ENCODE measurements at regions of chr12 and their contacts with region 1.

Region 1: DNA sequence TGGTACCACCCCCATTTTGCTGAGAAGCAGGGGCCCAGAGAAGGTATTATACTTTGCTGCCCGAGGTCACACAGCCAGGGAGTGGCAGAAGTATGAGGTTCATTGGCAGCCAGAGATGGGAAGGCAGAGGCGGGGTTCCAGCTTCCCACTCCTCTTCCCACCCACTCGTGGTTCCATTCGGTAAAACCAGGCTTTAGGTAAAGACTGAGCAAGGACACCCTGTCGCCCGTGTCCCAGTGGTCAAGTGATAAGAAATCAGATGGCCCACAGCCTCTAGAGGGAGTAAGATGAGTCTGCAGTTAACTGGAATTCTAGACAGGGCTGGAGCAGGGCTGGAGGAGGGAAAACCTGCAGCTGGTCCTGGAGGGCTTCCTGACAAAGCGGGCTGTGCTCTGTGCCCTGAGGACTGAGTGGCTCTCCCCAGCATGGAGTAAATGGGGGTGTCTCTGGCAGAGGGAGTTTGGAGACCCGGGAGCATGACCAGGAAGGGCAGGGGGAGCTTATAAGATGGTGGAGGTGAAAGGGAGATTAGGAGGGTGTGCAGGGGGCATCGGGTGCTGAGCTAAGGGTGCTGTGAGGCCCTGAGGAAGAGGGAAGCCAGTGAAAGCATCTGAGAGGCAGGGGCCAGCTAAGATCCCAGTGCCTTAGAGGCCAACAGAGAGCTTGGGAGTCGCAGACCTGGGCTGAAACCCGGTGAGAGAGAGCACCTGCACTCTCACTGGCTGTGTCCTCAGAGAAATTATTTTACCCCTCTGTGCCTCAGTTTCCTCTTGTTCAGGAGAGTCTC is 5.8 kb downstream of the FAM222A start:
- DNase-seq: peak; percentile 72
- H3K4me3 ChIP-seq: peak overlapping the region in 1 of 2 experiments; percentile 62; a peak in 1 of 4 replicates
- H3K27ac ChIP-seq: peak overlapping the region in 1 of 2 experiments; percentile 92; a peak in 2 of 4 replicates
- H3K4me1 ChIP-seq: peaks cover 0 to 90% of the 10 kb centered on the region in 2 experiments; a peak in 2 of 4 replicates
- H3K27me3 ChIP-seq: no peaks in the 10 kb centered on the region; the same call in none of the 2 replicates
- CTCF ChIP-seq: peak; percentile 40
- EP300 ChIP-seq: no peak; a peak in 1 of 4 replicates
- RAD21 ChIP-seq: peak; percentile 62

Region 2: GRCh38 chr12:109645194-109645593 is 74.2 kb before region 1 on chr12:
- CTCF ChIA-PET with region 1: interaction called, 11 read pairs
- POLR2A ChIA-PET with region 1: interaction called, 14 read pairs
- DNase-seq: peak; percentile 70
- H3K4me3 ChIP-seq: no peak overlapping the region
- H3K27ac ChIP-seq: peak overlapping the region in 1 of 2 experiments; percentile 95; a peak in 2 of 4 replicates
- H3K4me1 ChIP-seq: peaks cover 0 to 55% of the 10 kb centered on the region in 2 experiments; a peak in 2 of 4 replicates
- H3K27me3 ChIP-seq: no peaks in the 10 kb centered on the region; the same call in 1 of the 2 replicates
- CTCF ChIP-seq: no peak
- EP300 ChIP-seq: peak in 1 of 2 experiments; percentile 62; a peak in 1 of 4 replicates
- RAD21 ChIP-seq: peak; percentile 6; the same call in 1 of the 2 replicates

Region 3: DNA sequence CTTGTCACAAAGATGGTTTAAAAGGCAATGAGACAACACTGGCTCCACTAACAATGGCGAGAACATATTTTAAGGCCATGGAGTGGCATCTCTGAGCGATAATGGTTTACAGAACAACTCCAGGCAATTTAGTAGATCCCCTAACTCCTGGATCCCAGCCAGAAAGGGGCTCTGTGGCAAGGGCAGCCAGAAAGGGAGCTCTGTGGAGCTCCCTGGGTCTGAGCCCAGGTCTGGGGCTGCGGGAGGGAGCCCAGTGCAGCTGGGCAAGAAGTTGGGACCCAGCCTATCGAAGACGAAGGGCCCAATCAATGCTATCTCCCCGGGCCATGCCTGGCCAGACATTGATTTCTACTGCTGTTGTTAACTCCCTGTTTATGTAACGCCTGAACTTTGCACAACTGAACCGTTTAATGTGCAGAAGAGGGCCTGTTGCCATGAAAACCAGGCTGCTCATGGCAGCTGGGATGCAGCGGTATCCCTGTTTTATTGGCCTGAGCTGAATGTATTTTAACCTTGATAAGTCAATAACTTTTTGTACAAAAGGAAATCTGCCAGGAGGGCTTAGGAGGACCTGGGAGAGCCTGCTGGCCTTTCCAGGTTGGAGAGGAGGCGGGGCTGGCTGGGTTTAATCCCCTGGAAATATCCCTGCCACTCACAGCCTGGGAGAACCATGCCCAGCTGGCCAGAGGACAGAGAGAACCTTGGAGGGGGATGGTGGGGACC is 12.5 kb before region 1 on chr12:
- CTCF ChIA-PET with region 1: interaction called, 11 read pairs
- POLR2A ChIA-PET with region 1: interaction called, 6 read pairs
- DNase-seq: peak; percentile 80
- H3K4me3 ChIP-seq: no peak overlapping the region
- H3K27ac ChIP-seq: peak overlapping the region in 1 of 2 experiments; percentile 89; a peak in 2 of 4 replicates
- H3K4me1 ChIP-seq: peaks cover 0 to 38% of the 10 kb centered on the region in 2 experiments; a peak in 2 of 4 replicates
- H3K27me3 ChIP-seq: no peaks in the 10 kb centered on the region
- CTCF ChIP-seq: no peak
- EP300 ChIP-seq: peak in 1 of 2 experiments; percentile 54; a peak in 2 of 4 replicates
- RAD21 ChIP-seq: peak; percentile 21

Region 4: GRCh38 chr12:109752117-109753053 is 33.0 kb after region 1 on chr12:
- CTCF ChIA-PET with region 1: interaction called, 17 read pairs
- POLR2A ChIA-PET with region 1: interaction called, 6 read pairs
- DNase-seq: peak; percentile 82
- H3K4me3 ChIP-seq: no peak overlapping the region
- H3K27ac ChIP-seq: peak overlapping the region in 1 of 2 experiments; percentile 98; a peak in 2 of 4 replicates
- H3K4me1 ChIP-seq: peaks cover 0 to 35% of the 10 kb centered on the region in 2 experiments; a peak in 2 of 4 replicates
- H3K27me3 ChIP-seq: no peaks in the 10 kb centered on the region
- CTCF ChIP-seq: no peak
- EP300 ChIP-seq: peak; percentile 54 to 100; a peak in 3 of 4 replicates
- RAD21 ChIP-seq: peak; percentile 32

Region 5: GRCh38 chr12:109775172-109775881 is 55.9 kb after region 1 on chr12:
- CTCF ChIA-PET with region 1: interaction called, 31 read pairs
- POLR2A ChIA-PET with region 1: no interaction called
- DNase-seq: peak; percentile 76
- H3K4me3 ChIP-seq: peak overlapping the region in 1 of 2 experiments; percentile 17; a peak in 1 of 4 replicates
- H3K27ac ChIP-seq: no peak overlapping the region
- H3K4me1 ChIP-seq: peaks cover 0 to 5% of the 10 kb centered on the region in 2 experiments; a peak in 1 of 4 replicates
- H3K27me3 ChIP-seq: no peaks in the 10 kb centered on the region
- CTCF ChIP-seq: peak; percentile 86
- EP300 ChIP-seq: no peak
- RAD21 ChIP-seq: peak; percentile 79

Measured in SK-N-SH (cell line).